ENCODE measurements at regions of chr16 and their contacts with region 1.

Region 1: GRCh38 chr16:85610508-85611332 is 2.4 kb upstream of the GSE1 start:
- DNase-seq: peak; percentile 88 to 96
- H3K4me3 ChIP-seq: peak overlapping the region; percentile 29 to 92 (median 52); a peak in 6 of 8 replicates
- H3K27ac ChIP-seq: peak overlapping the region; percentile 70; the same call in 1 of the 2 replicates
- H3K4me1 ChIP-seq: peaks cover 10 to 46% (median 41%) of the 10 kb centered on the region in 4 experiments
- H3K27me3 ChIP-seq: peaks cover 0 to 9% (median 4%) of the 10 kb centered on the region in 4 experiments; a peak in 2 of 7 replicates
- CTCF ChIP-seq: peak in 2 of 3 experiments; percentile 90 to 99; a peak in 3 of 4 replicates
- EP300 ChIP-seq: peak in 1 of 2 experiments; percentile 83; a peak in 1 of 3 replicates
- POLR2A ChIP-seq: no peak
- RAD21 ChIP-seq: peak; percentile 97 to 98

Region 2: GRCh38 chr16:85448557-85449197 is 162.0 kb before region 1 on chr16:
- CTCF ChIA-PET with region 1: interaction called, 22 read pairs
- POLR2A ChIA-PET with region 1: no interaction called
- DNase-seq: no peak
- H3K4me3 ChIP-seq: no peak overlapping the region
- H3K27ac ChIP-seq: no peak overlapping the region
- H3K4me1 ChIP-seq: peaks cover 0 to 23% (median 16%) of the 10 kb centered on the region in 4 experiments; a peak in 6 of 7 replicates
- H3K27me3 ChIP-seq: no peaks in the 10 kb centered on the region
- CTCF ChIP-seq: no peak
- EP300 ChIP-seq: no peak
- POLR2A ChIP-seq: no peak
- RAD21 ChIP-seq: no peak

Region 3: GRCh38 chr16:85514595-85515318 is 96.0 kb before region 1 on chr16:
- CTCF ChIA-PET with region 1: interaction called, 13 read pairs
- POLR2A ChIA-PET with region 1: interaction called, 3 read pairs
- DNase-seq: no peak
- H3K4me3 ChIP-seq: no peak overlapping the region
- H3K27ac ChIP-seq: no peak overlapping the region
- H3K4me1 ChIP-seq: peaks cover 0 to 20% (median 14%) of the 10 kb centered on the region in 4 experiments; a peak in 6 of 7 replicates
- H3K27me3 ChIP-seq: no peaks in the 10 kb centered on the region; a peak in 1 of 7 replicates
- CTCF ChIP-seq: no peak
- EP300 ChIP-seq: no peak
- POLR2A ChIP-seq: no peak
- RAD21 ChIP-seq: no peak

Region 4: DNA sequence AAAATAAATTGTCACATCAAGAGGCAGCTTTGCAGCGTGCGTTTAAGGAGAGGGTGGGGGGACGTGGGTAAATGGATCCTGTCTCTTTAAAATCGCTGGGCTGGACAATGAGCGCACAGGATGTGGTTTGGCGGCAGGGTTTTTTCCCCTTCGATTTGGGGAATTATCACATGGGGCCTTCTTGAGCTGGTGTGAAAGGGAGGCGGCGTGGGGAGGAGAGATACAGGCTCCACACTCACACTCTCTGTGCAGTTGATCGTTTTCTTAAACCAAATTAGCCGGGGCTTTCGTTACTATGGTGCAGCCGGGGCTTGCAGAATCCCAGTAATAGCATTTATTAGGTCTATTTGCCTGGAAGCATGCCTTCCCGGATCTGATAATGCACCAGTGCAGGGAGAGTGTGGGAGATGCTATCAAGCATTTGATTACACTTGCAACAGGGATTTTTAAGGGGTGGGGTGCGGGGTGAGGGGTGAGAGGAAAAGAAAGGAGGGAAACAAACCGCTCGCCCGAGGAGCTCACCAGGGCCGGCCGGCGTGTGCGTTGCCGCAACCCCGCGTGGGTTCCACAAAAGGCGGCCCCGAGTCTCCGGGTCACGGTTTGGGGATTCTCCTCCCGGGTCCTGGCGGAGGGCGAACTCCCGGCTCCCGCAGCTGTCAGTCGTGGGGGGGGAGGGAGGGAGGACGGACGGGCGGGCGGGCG is 56.5 kb before region 1 on chr16:
- CTCF ChIA-PET with region 1: interaction called, 68 read pairs
- POLR2A ChIA-PET with region 1: interaction called, 29 read pairs
- DNase-seq: no peak
- H3K4me3 ChIP-seq: peak overlapping the region; percentile 54 to 98 (median 61)
- H3K27ac ChIP-seq: no peak overlapping the region
- H3K4me1 ChIP-seq: peaks cover 0 to 27% (median 21%) of the 10 kb centered on the region in 4 experiments; a peak in 6 of 7 replicates
- H3K27me3 ChIP-seq: no peaks in the 10 kb centered on the region; a peak in 2 of 7 replicates
- CTCF ChIP-seq: no peak
- EP300 ChIP-seq: no peak
- POLR2A ChIP-seq: no peak
- RAD21 ChIP-seq: no peak

Region 5: GRCh38 chr16:85583491-85584181 is 27.1 kb before region 1 on chr16:
- CTCF ChIA-PET with region 1: interaction called, 65 read pairs
- POLR2A ChIA-PET with region 1: interaction called, 6 read pairs
- DNase-seq: peak in 1 of 2 experiments; percentile 51
- H3K4me3 ChIP-seq: peak overlapping the region in 2 of 4 experiments; percentile 14 to 31; a peak in 4 of 8 replicates
- H3K27ac ChIP-seq: no peak overlapping the region
- H3K4me1 ChIP-seq: peaks cover 32 to 84% (median 78%) of the 10 kb centered on the region in 4 experiments
- H3K27me3 ChIP-seq: peaks cover 0 to 32% (median 24%) of the 10 kb centered on the region in 4 experiments; a peak in 5 of 7 replicates
- CTCF ChIP-seq: no peak
- EP300 ChIP-seq: no peak
- POLR2A ChIP-seq: 0 out of 3 replicates have a peak, but pooled peaks of 1 of the 2 experiments have one; percentile 19
- RAD21 ChIP-seq: no peak